CD8-positive, alpha-beta memory T cell (primary cell): ENCODE measurements at regions of chr7 and their contacts with region 1.

Region 1: GRCh38 chr7:923108-924041 is 31.1 kb downstream of the ADAP1 start:
- DNase-seq: peak; percentile 88 to 95 (median 90)
- H3K4me3 ChIP-seq: peak overlapping the region; percentile 81
- H3K4me3 Mint-ChIP-seq: peak overlapping the region; percentile 76 to 94 (median 90)
- H3K27ac ChIP-seq: peak overlapping the region; percentile 79
- H3K27ac Mint-ChIP-seq: peak overlapping the region; percentile 82 to 100 (median 98)
- H3K4me1 ChIP-seq: peaks cover 38% of the 10 kb centered on the region
- H3K4me1 Mint-ChIP-seq: peaks cover 22 to 60% (median 36%) of the 10 kb centered on the region in 3 donors
- H3K27me3 ChIP-seq: no peaks in the 10 kb centered on the region
- H3K27me3 Mint-ChIP-seq: no peaks in the 10 kb centered on the region

Region 2: DNA sequence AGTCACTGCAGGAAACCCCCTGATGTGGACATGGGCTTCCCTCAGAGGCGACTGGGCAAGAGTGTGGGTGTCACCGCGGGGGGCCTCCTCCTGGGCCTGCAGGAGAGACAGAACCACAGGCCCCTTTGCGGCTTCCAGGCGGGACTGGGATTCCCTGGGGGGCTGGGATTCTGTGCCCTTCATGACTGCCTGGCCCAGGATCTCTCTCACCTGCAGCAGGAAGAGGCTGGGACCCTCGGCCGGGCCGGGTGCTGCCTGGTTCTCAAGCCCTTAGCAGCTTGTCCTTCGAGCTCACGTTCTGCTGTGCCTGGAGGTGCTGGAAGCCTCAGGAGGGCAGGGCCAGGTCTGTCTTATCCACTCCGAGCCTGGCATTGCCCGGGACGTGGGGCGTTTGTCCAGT is 79.3 kb before region 1 on chr7:
- CTCF ChIA-PET with region 1: no interaction called
- POLR2A ChIA-PET with region 1: no interaction called
- DNase-seq: no peak
- H3K4me3 ChIP-seq: no peak overlapping the region
- H3K4me3 Mint-ChIP-seq: no peak overlapping the region
- H3K27ac ChIP-seq: no peak overlapping the region
- H3K27ac Mint-ChIP-seq: peak overlapping the region in 1 of 8 donors; percentile 82
- H3K4me1 ChIP-seq: no peaks in the 10 kb centered on the region
- H3K4me1 Mint-ChIP-seq: no peaks in the 10 kb centered on the region
- H3K27me3 ChIP-seq: no peaks in the 10 kb centered on the region
- H3K27me3 Mint-ChIP-seq: no peaks in the 10 kb centered on the region

Region 3: DNA sequence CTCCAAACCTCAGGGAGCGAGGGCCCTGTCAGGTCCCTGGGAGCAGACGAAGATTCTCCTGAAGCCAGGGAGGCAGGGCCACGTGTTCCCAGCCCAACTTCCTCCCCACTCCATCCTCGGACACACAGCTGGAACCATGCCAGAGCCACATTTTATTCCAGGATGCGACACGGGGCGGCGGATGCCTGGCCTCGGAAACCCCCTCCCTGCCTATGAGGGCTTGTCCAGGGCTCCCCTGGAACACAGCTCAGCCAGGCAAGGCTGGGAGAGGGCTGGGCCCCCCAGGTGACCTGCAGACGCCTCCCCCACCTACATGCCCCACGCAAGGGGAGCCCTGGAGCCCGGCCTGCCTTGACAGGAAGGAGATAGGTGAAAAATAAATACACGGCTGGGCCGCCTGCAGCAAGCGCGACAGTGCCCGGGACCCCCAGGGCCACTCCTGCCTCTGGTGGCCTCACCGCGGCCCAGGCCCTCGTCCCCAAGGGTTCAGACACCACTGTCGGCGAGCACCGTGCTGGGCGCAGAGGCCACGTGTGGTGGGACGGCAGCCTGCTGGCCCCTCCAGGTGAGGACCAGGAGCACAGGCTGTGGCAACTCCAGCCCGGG is 25.5 kb before region 1 on chr7:
- CTCF ChIA-PET with region 1: no interaction called
- POLR2A ChIA-PET with region 1: no interaction called
- DNase-seq: no peak
- H3K4me3 ChIP-seq: no peak overlapping the region
- H3K4me3 Mint-ChIP-seq: no peak overlapping the region
- H3K27ac ChIP-seq: no peak overlapping the region
- H3K27ac Mint-ChIP-seq: no peak overlapping the region
- H3K4me1 ChIP-seq: no peaks in the 10 kb centered on the region
- H3K4me1 Mint-ChIP-seq: peaks cover 0 to 5% (median 0%) of the 10 kb centered on the region in 3 donors
- H3K27me3 ChIP-seq: no peaks in the 10 kb centered on the region
- H3K27me3 Mint-ChIP-seq: no peaks in the 10 kb centered on the region

Region 4: DNA sequence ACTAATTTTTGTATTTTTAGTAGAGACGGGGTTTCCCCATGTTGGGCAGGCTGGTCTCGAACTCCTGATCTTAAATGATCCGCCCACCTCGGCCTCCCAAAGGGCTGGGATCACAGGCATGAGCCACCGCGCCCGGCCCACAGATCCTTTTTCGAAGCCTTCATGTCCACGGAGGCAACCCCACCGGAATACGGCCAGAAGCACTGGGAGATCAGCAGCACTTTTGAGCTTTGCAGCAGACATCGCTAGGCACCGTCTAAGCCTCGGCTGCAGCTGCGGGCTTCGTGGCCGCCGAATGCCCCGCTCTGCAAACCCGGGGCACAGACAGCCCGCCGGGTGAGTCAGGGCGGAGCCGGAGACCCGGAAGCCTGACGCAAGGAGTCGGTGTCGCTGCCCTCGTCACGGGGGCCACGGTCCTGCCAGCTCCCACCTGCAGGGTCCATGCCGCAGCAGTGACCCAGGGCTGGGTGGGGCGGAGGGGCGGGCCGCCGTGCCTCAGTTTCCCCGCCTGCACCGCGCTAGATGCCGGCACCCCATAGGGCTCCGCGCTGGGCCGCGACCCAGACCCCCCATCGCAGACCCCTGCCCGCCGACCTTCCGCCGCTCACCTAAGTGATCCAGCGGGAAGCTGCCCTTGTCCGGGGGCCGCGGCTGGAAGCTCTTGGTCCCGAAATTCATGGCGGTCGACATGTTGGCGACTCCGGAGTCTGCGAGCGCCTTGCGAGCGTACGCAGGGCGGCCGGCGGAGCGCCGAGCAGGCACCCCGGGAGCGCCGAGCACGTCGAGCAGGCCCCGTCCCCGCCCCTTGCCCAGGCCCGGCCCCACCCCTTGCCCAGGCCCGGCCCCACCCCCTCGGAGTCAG is 51.7 kb after region 1 on chr7 and contains the start of gene COX19:
- CTCF ChIA-PET with region 1: no interaction called
- POLR2A ChIA-PET with region 1: interaction called, 10 read pairs
- DNase-seq: peak; percentile 84 to 91 (median 86)
- H3K4me3 ChIP-seq: peak within 1 kb of the TSS; percentile 79
- H3K4me3 Mint-ChIP-seq: peak within 1 kb of the TSS; percentile 90 to 97 (median 93)
- H3K27ac ChIP-seq: peak within 1 kb of the TSS; percentile 87
- H3K27ac Mint-ChIP-seq: peak within 1 kb of the TSS; percentile 90 to 98 (median 96)
- H3K4me1 ChIP-seq: peaks cover 29% of the 10 kb centered on the region
- H3K4me1 Mint-ChIP-seq: peaks cover 28 to 36% (median 35%) of the 10 kb centered on the region in 3 donors
- H3K27me3 ChIP-seq: no peaks in the 10 kb centered on the region
- H3K27me3 Mint-ChIP-seq: peaks cover 0 to 2% of the 10 kb centered on the region in 2 donors
- total RNA-seq, gene COX19: 18.9 to 21.3 TPM